Ascending aorta (tissue), 2 donors: ENCODE measurements at regions of chr1 and their contacts with region 1.

Region 1: GRCh38 chr1:81800695-81801650 is at the start of gene ADGRL2:
- DNase-seq: peak; percentile 31 to 88
- H3K4me3 ChIP-seq: peak within 1 kb of the TSS; percentile 74 to 96
- H3K27ac ChIP-seq: peak within 1 kb of the TSS; percentile 96 to 100
- H3K4me1 ChIP-seq: peaks cover 0 to 9% of the 10 kb centered on the region in 2 donors
- H3K27me3 ChIP-seq: no peaks in the 10 kb centered on the region
- CTCF ChIP-seq: peak in 1 of 3 experiments; percentile 2
- total RNA-seq, gene ADGRL2: 48.9 TPM

Region 2: DNA sequence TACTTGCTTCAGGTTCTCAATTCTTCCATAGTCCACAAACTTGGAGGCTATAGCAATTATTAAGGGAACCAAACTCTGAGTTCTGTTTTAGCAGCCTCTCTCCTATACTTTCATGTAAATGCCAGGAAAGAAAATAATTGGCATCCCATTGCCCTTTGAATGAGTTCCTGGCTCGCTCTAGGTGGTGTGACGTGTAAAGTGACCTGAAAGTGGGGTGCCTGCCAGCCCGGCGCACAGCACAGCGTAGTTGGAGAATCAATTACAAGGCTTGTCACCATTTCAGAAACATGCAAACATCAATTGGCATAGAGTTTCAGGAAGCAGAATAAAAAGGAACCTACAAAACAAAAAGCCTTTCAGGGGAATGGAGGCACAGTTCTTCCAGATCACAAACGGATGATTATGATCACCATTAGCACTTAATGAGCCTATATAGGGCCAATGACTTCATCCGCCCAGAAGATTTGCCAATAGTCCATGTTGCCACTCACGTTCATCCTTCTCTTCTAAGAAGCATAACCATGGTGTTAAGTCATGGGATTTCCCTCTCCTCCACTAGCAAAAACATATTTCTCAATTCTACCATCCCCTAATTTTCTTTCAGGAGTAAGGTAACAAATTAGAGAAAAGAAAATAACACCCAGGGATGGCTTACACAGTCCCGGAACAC is 354.8 kb before region 1 on chr1:
- intact Hi-C with region 1: no loop called
- DNase-seq: no peak
- H3K4me3 ChIP-seq: no peak overlapping the region
- H3K27ac ChIP-seq: no peak overlapping the region
- H3K4me1 ChIP-seq: no peaks in the 10 kb centered on the region
- H3K27me3 ChIP-seq: no peaks in the 10 kb centered on the region
- CTCF ChIP-seq: no peak

Region 3: GRCh38 chr1:81949433-81949832 is 148.5 kb after region 1 on chr1:
- intact Hi-C with region 1: loop called (anchors 5 kb)
- DNase-seq: no peak
- H3K4me3 ChIP-seq: no peak overlapping the region
- H3K27ac ChIP-seq: no peak overlapping the region
- H3K4me1 ChIP-seq: peaks cover 0 to 14% of the 10 kb centered on the region in 2 donors
- H3K27me3 ChIP-seq: no peaks in the 10 kb centered on the region
- CTCF ChIP-seq: no peak

Region 4: DNA sequence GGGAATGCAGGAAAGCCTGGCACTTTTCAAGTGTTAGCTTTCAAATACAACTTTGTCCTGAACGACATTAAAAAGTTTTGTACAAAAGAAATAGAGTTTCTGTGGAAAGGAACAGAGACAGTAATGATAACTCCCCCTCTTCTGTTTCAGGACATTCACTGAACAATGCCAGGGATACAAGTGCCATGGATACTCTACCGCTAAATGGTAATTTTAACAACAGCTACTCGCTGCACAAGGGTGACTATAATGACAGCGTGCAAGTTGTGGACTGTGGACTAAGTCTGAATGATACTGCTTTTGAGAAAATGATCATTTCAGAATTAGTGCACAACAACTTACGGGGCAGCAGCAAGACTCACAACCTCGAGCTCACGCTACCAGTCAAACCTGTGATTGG is 189.3 kb after region 1 on chr1:
- intact Hi-C with region 1: loop called (anchors 5 kb)
- DNase-seq: no peak
- H3K4me3 ChIP-seq: no peak overlapping the region
- H3K27ac ChIP-seq: no peak overlapping the region
- H3K4me1 ChIP-seq: no peaks in the 10 kb centered on the region
- H3K27me3 ChIP-seq: no peaks in the 10 kb centered on the region
- CTCF ChIP-seq: no peak

Region 5: GRCh38 chr1:82161700-82162141 is 360.7 kb after region 1 on chr1:
- intact Hi-C with region 1: loop called (anchors 5 kb)
- DNase-seq: no peak
- H3K4me3 ChIP-seq: peak overlapping the region; percentile 17 to 35
- H3K27ac ChIP-seq: no peak overlapping the region
- H3K4me1 ChIP-seq: no peaks in the 10 kb centered on the region
- H3K27me3 ChIP-seq: no peaks in the 10 kb centered on the region
- CTCF ChIP-seq: no peak

Region 6: GRCh38 chr1:82225421-82226185 is 424.6 kb after region 1 on chr1:
- intact Hi-C with region 1: loop called (anchors 2 kb)
- DNase-seq: no peak
- H3K4me3 ChIP-seq: no peak overlapping the region
- H3K27ac ChIP-seq: peak overlapping the region; percentile 74 to 75
- H3K4me1 ChIP-seq: peaks cover 10 to 20% of the 10 kb centered on the region in 2 donors
- H3K27me3 ChIP-seq: no peaks in the 10 kb centered on the region
- CTCF ChIP-seq: no peak

Region 7: GRCh38 chr1:82392513-82392912 is 591.5 kb after region 1 on chr1:
- intact Hi-C with region 1: loop called (anchors 10 kb)
- DNase-seq: no peak
- H3K4me3 ChIP-seq: no peak overlapping the region
- H3K27ac ChIP-seq: no peak overlapping the region
- H3K4me1 ChIP-seq: peaks cover 0 to 4% of the 10 kb centered on the region in 2 donors
- H3K27me3 ChIP-seq: no peaks in the 10 kb centered on the region
- CTCF ChIP-seq: no peak

Region 8: GRCh38 chr1:82565146-82565545 is 764.2 kb after region 1 on chr1:
- intact Hi-C with region 1: loop called (anchors 10 kb)
- DNase-seq: no peak
- H3K4me3 ChIP-seq: no peak overlapping the region
- H3K27ac ChIP-seq: peak overlapping the region in 1 of 2 donors; percentile 33
- H3K4me1 ChIP-seq: peaks cover 0 to 20% of the 10 kb centered on the region in 2 donors
- H3K27me3 ChIP-seq: no peaks in the 10 kb centered on the region
- CTCF ChIP-seq: no peak